Adrenal gland (tissue), 19 donors: ENCODE measurements at regions of chr9 and their contacts with region 1.

Region 1: GRCh38 chr9:69971643-69972449 is 71.8 kb upstream of the MAMDC2 start:
- DNase-seq: peak; percentile 61 to 84 (median 63)
- H3K4me3 ChIP-seq: no peak overlapping the region
- H3K27ac ChIP-seq: no peak overlapping the region
- H3K4me1 ChIP-seq: no peaks in the 10 kb centered on the region
- H3K27me3 ChIP-seq: no peaks in the 10 kb centered on the region
- CTCF ChIP-seq: peak; percentile 50 to 82 (median 71)
- POLR2A ChIP-seq: no peak

Region 2: DNA sequence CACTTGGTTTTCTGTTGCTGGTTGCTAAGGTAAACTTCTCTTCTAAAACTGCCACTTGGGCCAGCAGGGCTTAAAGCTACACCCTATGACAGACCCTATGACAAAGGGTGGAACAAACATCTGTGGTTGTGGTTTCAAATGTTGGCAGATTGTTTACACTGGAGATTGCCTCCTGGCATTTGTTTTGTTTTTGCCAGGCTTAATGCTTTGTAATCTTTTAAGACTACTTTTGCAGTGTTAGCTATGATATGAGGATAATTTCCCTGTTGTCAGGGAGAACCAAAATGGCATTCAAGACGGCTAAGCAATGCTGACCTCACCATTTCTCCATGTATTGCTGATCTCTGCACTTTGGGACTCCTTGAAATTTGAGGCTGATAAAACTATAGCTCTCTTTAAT is 122.1 kb after region 1 on chr9:
- intact Hi-C with region 1: no loop called
- DNase-seq: no peak
- H3K4me3 ChIP-seq: no peak overlapping the region
- H3K27ac ChIP-seq: no peak overlapping the region
- H3K4me1 ChIP-seq: no peaks in the 10 kb centered on the region
- H3K27me3 ChIP-seq: no peaks in the 10 kb centered on the region
- CTCF ChIP-seq: no peak
- POLR2A ChIP-seq: no peak

Region 3: GRCh38 chr9:70111042-70111602 is 139.3 kb after region 1 on chr9:
- intact Hi-C with region 1: loop called (anchors 5 kb)
- DNase-seq: peak; percentile 57 to 88 (median 79)
- H3K4me3 ChIP-seq: no peak overlapping the region
- H3K27ac ChIP-seq: no peak overlapping the region
- H3K4me1 ChIP-seq: peaks cover 0 to 7% of the 10 kb centered on the region in 2 donors
- H3K27me3 ChIP-seq: no peaks in the 10 kb centered on the region
- CTCF ChIP-seq: peak; percentile 62 to 89 (median 74)
- POLR2A ChIP-seq: no peak

Region 4: DNA sequence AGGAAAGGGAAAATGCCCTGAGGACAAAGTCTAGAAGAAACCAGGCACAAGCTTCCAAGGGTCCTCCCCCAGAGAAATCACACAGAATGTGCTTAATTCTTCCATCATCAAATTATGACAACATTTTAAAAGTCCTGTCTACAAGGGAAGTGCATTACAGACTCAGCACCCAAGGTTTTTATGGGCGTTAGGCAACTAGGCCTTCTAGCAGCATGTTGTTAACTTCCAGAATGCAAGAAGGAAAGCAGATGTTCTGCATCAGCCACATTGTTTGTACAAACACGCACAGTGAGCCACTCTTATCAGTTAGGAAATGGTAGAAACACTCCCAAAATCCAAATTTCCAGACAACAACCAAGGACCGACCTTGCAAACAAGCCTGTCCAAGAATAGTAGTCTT is 313.4 kb after region 1 on chr9:
- intact Hi-C with region 1: no loop called
- DNase-seq: peak in 3 of 7 donors; percentile 7 to 55 (median 24)
- H3K4me3 ChIP-seq: no peak overlapping the region
- H3K27ac ChIP-seq: peak overlapping the region in 2 of 5 donors; percentile 20 to 54
- H3K4me1 ChIP-seq: peaks cover 0 to 21% of the 10 kb centered on the region in 2 donors
- H3K27me3 ChIP-seq: no peaks in the 10 kb centered on the region
- CTCF ChIP-seq: no peak
- POLR2A ChIP-seq: no peak